Aorta (tissue), 5 donors: ENCODE measurements at regions of chr19 and their contacts with region 1.

Region 1: GRCh38 chr19:4791170-4792018 is at the start of gene FEM1A:
- DNase-seq: peak; percentile 99 to 100
- ATAC-seq: peak; percentile 100
- H3K4me3 ChIP-seq: peak within 1 kb of the TSS; percentile 30 to 69
- H3K27ac ChIP-seq: peak within 1 kb of the TSS in 1 of 2 donors; percentile 54
- H3K4me1 ChIP-seq: no peaks in the 10 kb centered on the region
- H3K27me3 ChIP-seq: no peaks in the 10 kb centered on the region
- total RNA-seq, gene FEM1A: 6.9 to 9.0 TPM

Region 2: DNA sequence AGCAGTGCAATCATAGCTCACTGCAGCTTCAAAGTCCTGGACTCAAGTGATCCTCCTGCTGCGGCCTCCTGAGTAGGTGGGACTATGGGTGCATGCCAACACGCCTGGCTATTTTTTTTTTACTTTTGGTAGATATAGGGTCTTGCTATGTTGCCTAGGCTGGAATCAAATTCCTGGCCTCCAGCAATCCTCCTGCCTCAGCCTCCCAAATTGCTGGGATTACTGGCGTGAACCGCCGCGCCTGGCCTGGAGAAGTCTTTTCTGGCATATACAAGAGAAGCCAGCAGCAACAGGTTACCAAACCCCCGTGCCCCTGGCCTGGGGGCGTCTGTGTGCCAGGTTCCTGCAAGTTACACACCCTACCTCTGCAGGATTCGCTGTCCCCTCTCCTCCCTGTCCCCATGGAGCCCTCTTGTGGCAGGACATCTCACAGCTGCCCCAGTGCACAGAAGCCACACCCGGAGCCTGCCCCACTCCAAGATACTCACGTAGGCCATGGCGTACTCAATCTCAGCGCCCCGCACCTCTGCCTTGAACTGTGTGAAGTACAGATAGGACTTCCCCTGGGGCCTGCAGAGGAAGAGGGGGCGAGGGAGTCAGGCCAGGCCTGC is 131.1 kb before region 1 on chr19:
- intact Hi-C with region 1: no loop called
- DNase-seq: no peak
- ATAC-seq: no peak
- H3K4me3 ChIP-seq: no peak overlapping the region
- H3K27ac ChIP-seq: no peak overlapping the region
- H3K4me1 ChIP-seq: no peaks in the 10 kb centered on the region
- H3K27me3 ChIP-seq: no peaks in the 10 kb centered on the region

Region 3: DNA sequence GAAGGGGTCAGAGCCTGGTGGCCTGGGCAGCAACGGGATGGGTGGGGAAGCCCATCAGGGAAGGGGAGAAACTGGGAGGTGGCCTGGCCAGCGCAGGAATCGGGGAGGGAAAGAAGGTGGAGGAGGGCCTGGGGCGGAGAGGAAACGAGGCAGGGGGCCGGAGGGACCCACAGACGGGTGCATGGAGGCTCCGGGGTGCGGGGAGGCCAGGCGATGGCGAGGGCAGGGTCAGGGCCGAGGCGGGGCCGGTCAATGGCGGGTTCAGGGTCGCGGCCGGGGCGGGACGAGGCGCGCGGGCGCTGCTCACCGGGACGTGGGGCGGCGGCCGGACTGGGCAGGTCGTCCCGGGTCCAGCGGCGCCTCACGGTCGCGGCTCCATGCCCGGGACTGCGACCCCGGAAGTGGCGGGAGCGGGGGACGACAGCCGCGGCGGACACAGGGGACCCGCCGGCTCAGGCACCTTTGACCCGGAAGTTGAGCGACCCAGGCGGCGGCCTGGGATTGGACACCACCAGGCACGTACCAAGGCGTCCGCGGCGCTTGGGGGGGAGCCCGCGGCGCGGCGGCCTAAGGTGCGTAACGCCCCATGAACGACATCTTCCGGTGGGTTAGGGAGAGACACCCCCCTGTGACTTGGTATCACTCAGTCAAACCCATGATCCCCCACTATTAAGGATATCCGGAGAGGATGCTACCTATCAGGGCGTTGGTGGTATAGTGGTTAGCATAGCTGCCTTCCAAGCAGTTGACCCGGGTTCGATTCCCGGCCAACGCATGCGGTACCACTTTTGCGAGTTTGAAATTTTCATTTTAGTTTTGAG is 67.8 kb before region 1 on chr19 and contains the start of gene DPP9:
- intact Hi-C with region 1: loop called in 1 of 2 experiments (anchors 2 kb)
- DNase-seq: peak; percentile 98
- ATAC-seq: peak; percentile 96
- H3K4me3 ChIP-seq: peak within 1 kb of the TSS; percentile 60 to 64
- H3K27ac ChIP-seq: peak within 1 kb of the TSS in 1 of 2 donors; percentile 37
- H3K4me1 ChIP-seq: no peaks in the 10 kb centered on the region
- H3K27me3 ChIP-seq: no peaks in the 10 kb centered on the region
- total RNA-seq, gene DPP9: 46.1 to 56.4 TPM

Region 4: DNA sequence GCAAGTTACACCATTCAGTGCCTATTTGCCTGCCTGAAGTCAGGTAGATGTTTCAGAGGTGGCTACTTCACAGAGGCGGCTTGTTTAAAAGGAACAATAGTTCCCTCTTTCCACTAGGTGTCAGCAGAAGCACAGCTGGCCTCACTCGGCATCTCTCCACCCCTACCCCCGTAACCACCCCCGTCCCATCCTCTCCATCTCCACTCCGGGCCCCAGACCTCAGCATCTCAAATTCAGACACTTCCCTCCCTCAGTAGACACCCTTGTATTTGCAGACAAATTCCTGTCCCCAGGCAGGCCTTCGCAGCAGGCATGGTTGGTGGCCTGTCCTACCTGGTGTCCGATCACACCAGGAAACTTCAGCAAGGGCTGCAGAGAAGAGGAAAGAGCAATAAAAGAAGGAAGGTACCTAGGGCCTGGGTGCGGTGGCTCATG is 58.7 kb before region 1 on chr19:
- intact Hi-C with region 1: loop called (anchors 2 kb)
- DNase-seq: no peak
- ATAC-seq: peak; percentile 79
- H3K4me3 ChIP-seq: no peak overlapping the region
- H3K27ac ChIP-seq: no peak overlapping the region
- H3K4me1 ChIP-seq: no peaks in the 10 kb centered on the region
- H3K27me3 ChIP-seq: no peaks in the 10 kb centered on the region